H1 (cell line): ENCODE measurements at regions of chr3 and their contacts with region 1.

Region 1: GRCh38 chr3:108406063-108406660 is 104.2 kb downstream of the MYH15 start:
- DNase-seq: no peak
- H3K4me3 ChIP-seq: no peak overlapping the region
- H3K27ac ChIP-seq: no peak overlapping the region
- H3K4me1 ChIP-seq: peaks cover 0 to 1% (median 0%) of the 10 kb centered on the region in 4 experiments; a peak in 1 of 7 replicates
- H3K27me3 ChIP-seq: no peaks in the 10 kb centered on the region
- CTCF ChIP-seq: no peak
- EP300 ChIP-seq: no peak
- POLR2A ChIP-seq: no peak
- RAD21 ChIP-seq: no peak

Region 2: DNA sequence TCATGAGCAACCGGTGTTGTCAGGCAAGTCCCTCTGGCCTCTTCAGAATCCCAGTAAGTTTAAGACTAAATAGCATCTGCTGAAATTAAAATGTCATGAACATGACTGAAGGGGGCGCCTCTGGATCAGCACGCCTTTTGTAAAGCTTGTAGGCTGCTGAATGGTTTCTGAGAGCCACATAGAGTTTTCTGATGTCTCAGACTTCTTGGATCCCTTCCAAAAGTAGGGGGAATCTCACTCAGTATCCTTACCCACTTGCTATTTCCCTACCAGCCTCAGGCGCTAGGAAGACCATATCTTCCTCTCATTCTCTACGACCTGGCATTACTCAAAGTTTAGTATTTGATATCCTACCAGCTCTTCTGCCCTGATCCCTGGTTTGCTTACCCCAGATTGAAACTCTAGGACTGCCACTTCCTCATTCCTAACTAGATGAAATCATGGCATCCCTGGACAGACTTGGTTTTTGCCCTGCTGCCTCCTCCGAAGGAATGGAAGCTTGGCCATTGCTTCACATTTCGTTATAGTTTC is 252.6 kb before region 1 on chr3:
- CTCF ChIA-PET with region 1: interaction called, 12 read pairs
- POLR2A ChIA-PET with region 1: no interaction called
- DNase-seq: peak; percentile 29 to 64
- H3K4me3 ChIP-seq: no peak overlapping the region
- H3K27ac ChIP-seq: no peak overlapping the region
- H3K4me1 ChIP-seq: peaks cover 0 to 4% (median 0%) of the 10 kb centered on the region in 4 experiments; a peak in 1 of 7 replicates
- H3K27me3 ChIP-seq: no peaks in the 10 kb centered on the region
- CTCF ChIP-seq: peak in 2 of 3 experiments; percentile 70 to 74; a peak in 3 of 4 replicates
- EP300 ChIP-seq: no peak
- POLR2A ChIP-seq: no peak
- RAD21 ChIP-seq: peak; percentile 87 to 88

Region 3: DNA sequence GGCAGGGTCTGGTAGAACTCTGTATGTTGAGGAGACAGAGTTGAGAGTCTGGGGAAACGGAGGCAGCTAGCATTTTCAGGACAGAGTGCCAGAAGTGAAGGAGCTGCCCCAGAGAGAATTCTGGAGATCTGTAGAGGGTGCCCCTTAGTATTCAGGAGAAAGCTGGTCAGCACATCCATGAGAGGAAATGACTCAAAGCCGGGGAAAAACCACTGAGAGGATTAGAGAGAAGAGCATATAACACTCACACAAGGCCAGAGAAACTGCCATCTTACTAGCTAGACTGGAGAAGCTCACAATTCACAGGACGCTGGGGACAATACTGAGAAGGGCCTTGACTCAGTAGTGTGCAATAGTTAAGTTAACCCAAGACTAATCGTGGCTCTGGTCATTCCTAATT is 1006.9 kb after region 1 on chr3:
- CTCF ChIA-PET with region 1: no interaction called
- POLR2A ChIA-PET with region 1: no interaction called
- DNase-seq: no peak
- H3K4me3 ChIP-seq: no peak overlapping the region
- H3K27ac ChIP-seq: no peak overlapping the region
- H3K4me1 ChIP-seq: peaks cover 0 to 3% (median 0%) of the 10 kb centered on the region in 4 experiments; a peak in 1 of 7 replicates
- H3K27me3 ChIP-seq: no peaks in the 10 kb centered on the region
- CTCF ChIP-seq: no peak
- EP300 ChIP-seq: no peak
- POLR2A ChIP-seq: no peak
- RAD21 ChIP-seq: no peak